ENCODE measurements at regions of chr22 and their contacts with region 1.

Region 1: DNA sequence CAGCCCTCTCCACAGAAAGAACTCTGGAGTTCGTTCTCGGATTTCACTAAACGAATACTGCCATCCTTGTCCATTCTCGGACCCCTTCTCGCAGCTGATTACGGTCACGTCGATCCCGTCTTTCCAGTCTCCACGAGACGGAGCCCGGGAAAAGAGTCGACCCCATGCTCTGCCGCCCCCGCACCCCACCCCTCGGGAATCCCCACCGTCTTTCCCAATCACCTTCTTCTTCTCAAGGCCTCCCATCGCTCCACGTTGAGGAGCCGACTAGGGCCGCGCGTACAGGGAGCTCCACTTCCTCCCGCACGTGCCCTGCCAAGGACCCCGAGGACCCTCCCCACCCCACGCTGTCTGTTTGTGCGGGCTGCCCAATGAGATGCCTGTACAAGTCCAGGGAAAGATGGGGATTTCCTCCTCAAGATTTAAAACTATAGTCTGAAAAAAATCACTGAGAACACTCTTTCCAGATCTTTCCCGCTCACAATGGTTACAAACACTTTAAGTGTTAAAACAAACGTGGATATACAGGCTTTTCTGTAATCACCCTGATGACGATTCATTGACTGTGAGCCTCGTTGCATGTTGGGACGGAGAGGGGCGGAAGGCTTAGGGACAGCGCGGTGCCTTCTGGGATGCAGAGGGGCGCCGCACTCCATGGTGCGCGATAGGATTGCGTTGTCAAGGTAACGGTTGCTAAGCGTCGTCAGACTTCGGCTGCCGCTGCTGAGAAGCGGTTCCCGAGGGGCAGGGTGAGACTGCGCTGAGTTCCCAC is at the start of gene PES1:
- DNase-seq: peak; percentile 96
- ATAC-seq: peak; percentile 100
- H3K4me3 Mint-ChIP-seq: no peak within 1 kb of the TSS
- H3K27ac Mint-ChIP-seq: no peak within 1 kb of the TSS
- H3K4me1 Mint-ChIP-seq: no peaks in the 10 kb centered on the region
- H3K27me3 Mint-ChIP-seq: peaks cover 4% of the 10 kb centered on the region
- total RNA-seq, gene PES1: 134 to 137 TPM

Region 2: DNA sequence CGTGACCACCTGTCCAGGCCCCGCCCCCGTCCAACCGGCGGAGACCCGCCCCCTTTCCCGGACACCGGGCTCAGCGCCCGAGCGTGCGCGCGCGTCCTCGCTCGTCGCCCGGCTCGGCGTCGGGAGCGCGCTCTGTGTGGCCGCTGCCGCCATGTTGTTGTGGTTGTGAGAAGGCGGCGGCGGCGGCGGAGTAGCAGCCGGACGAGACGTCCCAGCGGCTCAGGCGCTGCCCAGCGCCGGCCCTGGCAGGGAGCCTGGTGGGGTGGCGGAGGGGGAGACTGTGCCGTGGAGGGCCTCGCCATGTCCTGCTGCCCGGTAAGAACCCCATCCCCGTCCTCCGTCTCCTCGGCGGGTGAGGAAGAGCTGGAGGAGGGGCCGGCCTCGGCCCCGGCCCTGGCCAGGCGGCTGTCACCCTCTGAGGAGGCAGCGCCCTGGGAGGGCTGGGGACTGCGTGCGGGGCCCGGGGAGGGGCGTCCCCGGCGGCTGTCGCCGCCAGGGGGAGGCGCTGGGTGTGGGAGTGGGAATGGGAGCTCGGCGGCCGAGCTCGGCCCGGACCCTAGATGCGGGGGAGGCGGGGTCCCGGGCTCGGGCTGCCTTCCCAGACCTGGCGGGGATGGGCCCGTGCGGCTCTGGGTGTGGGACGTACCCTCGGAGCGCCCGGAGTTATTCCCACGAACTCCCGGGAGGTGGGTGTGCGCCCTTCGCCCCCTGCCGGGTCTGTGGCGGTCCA is 708.6 kb before region 1 on chr22 and contains the start of gene MTMR3:
- CTCF ChIA-PET with region 1: no interaction called
- POLR2A ChIA-PET with region 1: no interaction called
- intact Hi-C with region 1: loop called in 1 of 2 experiments (anchors 5 kb)
- DNase-seq: peak; percentile 95
- ATAC-seq: peak; percentile 83
- H3K4me3 Mint-ChIP-seq: peak within 1 kb of the TSS; percentile 89
- H3K27ac Mint-ChIP-seq: peak within 1 kb of the TSS; percentile 84
- H3K4me1 Mint-ChIP-seq: peaks cover 6% of the 10 kb centered on the region
- H3K27me3 Mint-ChIP-seq: no peaks in the 10 kb centered on the region
- total RNA-seq, gene MTMR3: 19.2 to 22.8 TPM

Region 3: GRCh38 chr22:30356449-30357235 is 235.1 kb before region 1 on chr22 and contains the starts of genes CCDC157 and SF3A1:
- CTCF ChIA-PET with region 1: no interaction called
- POLR2A ChIA-PET with region 1: interaction called, 4 read pairs
- intact Hi-C with region 1: loop called in 1 of 2 experiments (anchors 1 kb)
- DNase-seq: peak; percentile 94
- ATAC-seq: peak; percentile 93
- H3K4me3 Mint-ChIP-seq: peak within 1 kb of the TSS; percentile 92
- H3K27ac Mint-ChIP-seq: peak within 1 kb of the TSS; percentile 90
- H3K4me1 Mint-ChIP-seq: peaks cover 48% of the 10 kb centered on the region
- H3K27me3 Mint-ChIP-seq: no peaks in the 10 kb centered on the region
- total RNA-seq, gene CCDC157: 2.4 to 3.7 TPM
- total RNA-seq, gene SF3A1: 254 to 499 TPM

Region 4: DNA sequence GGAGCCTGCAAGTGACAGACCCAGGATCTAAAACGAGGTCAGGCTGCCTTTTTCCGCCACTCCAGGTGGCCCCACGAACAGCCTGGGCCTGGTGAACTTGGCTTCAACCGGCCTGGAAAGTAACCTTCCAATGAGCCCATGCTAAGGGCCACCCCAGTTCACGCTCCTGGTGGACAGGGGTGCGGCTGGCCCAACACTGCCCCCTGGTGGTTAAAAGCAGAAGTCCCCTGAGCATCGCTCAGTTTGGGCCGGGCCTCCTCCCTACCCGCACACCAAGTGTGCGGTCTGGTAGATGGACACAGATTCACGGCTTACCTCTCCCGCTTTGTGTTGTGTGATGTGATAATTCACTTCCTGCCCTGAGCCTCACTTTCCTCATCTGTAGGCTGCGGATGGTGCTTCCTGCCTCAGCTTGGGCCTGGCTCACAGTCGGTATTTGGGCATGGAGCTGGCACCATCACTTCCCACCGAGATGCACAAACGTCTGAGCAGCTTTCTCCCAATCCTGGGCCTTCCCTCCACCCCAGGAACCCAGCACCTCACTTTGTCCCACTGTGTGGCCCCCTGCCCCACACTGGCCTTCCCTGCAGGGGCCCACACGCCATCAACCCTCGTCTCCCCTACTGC is 106.3 kb before region 1 on chr22:
- CTCF ChIA-PET with region 1: no interaction called
- POLR2A ChIA-PET with region 1: no interaction called
- intact Hi-C with region 1: no loop called
- DNase-seq: peak; percentile 86
- ATAC-seq: peak; percentile 100
- H3K4me3 Mint-ChIP-seq: no peak overlapping the region
- H3K27ac Mint-ChIP-seq: no peak overlapping the region
- H3K4me1 Mint-ChIP-seq: no peaks in the 10 kb centered on the region
- H3K27me3 Mint-ChIP-seq: no peaks in the 10 kb centered on the region

Region 5: GRCh38 chr22:30667494-30668385 is 76.0 kb after region 1 on chr22 and contains the start of gene DUSP18:
- CTCF ChIA-PET with region 1: no interaction called
- POLR2A ChIA-PET with region 1: no interaction called
- intact Hi-C with region 1: loop called in 1 of 2 experiments (anchors 1 kb)
- DNase-seq: peak; percentile 96
- ATAC-seq: peak; percentile 94
- H3K4me3 Mint-ChIP-seq: peak within 1 kb of the TSS; percentile 92
- H3K27ac Mint-ChIP-seq: peak within 1 kb of the TSS; percentile 69
- H3K4me1 Mint-ChIP-seq: peaks cover 19% of the 10 kb centered on the region
- H3K27me3 Mint-ChIP-seq: peaks cover 3% of the 10 kb centered on the region
- total RNA-seq, gene DUSP18: 7.8 to 8.5 TPM

Region 6: GRCh38 chr22:30685178-30685577 is 93.4 kb after region 1 on chr22:
- CTCF ChIA-PET with region 1: no interaction called
- POLR2A ChIA-PET with region 1: no interaction called
- intact Hi-C with region 1: no loop called
- DNase-seq: no peak
- ATAC-seq: no peak
- H3K4me3 Mint-ChIP-seq: no peak overlapping the region
- H3K27ac Mint-ChIP-seq: no peak overlapping the region
- H3K4me1 Mint-ChIP-seq: no peaks in the 10 kb centered on the region
- H3K27me3 Mint-ChIP-seq: no peaks in the 10 kb centered on the region

Region 7: GRCh38 chr22:31160328-31160978 is 568.7 kb after region 1 on chr22:
- CTCF ChIA-PET with region 1: no interaction called
- POLR2A ChIA-PET with region 1: no interaction called
- intact Hi-C with region 1: loop called in 1 of 2 experiments (anchors 5 kb)
- DNase-seq: peak; percentile 47
- ATAC-seq: peak; percentile 45
- H3K4me3 Mint-ChIP-seq: peak overlapping the region; percentile 85
- H3K27ac Mint-ChIP-seq: peak overlapping the region; percentile 95
- H3K4me1 Mint-ChIP-seq: peaks cover 29% of the 10 kb centered on the region
- H3K27me3 Mint-ChIP-seq: no peaks in the 10 kb centered on the region

Region 8: GRCh38 chr22:31802575-31802974 is 1210.8 kb after region 1 on chr22:
- CTCF ChIA-PET with region 1: no interaction called
- POLR2A ChIA-PET with region 1: no interaction called
- intact Hi-C with region 1: no loop called
- DNase-seq: no peak
- ATAC-seq: no peak
- H3K4me3 Mint-ChIP-seq: no peak overlapping the region
- H3K27ac Mint-ChIP-seq: no peak overlapping the region
- H3K4me1 Mint-ChIP-seq: no peaks in the 10 kb centered on the region
- H3K27me3 Mint-ChIP-seq: no peaks in the 10 kb centered on the region

Measured in activated CD4-positive, alpha-beta T cell treated with anti-CD3 and anti-CD28 coated beads for 36 hours (primary cell).